ENCODE measurements at regions of chr22 and their contacts with region 1.

Region 1: GRCh38 chr22:49305214-49305909 is 522.3 kb downstream of the BRD1 start:
- DNase-seq: peak; percentile 90
- H3K4me3 ChIP-seq: no peak overlapping the region
- H3K27ac ChIP-seq: peak overlapping the region in 1 of 2 experiments; percentile 53; a peak in 1 of 4 replicates
- H3K4me1 ChIP-seq: peaks cover 0 to 18% of the 10 kb centered on the region in 2 experiments; a peak in 1 of 4 replicates
- H3K27me3 ChIP-seq: no peaks in the 10 kb centered on the region; the same call in 1 of the 2 replicates
- CTCF ChIP-seq: peak; percentile 59
- EP300 ChIP-seq: no peak
- RAD21 ChIP-seq: peak; percentile 85

Region 2: GRCh38 chr22:48943567-48944432 is 361.6 kb before region 1 on chr22:
- CTCF ChIA-PET with region 1: interaction called, 18 read pairs
- POLR2A ChIA-PET with region 1: no interaction called
- DNase-seq: peak; percentile 82
- H3K4me3 ChIP-seq: no peak overlapping the region
- H3K27ac ChIP-seq: no peak overlapping the region; a peak in 1 of 4 replicates
- H3K4me1 ChIP-seq: peaks cover 0 to 3% of the 10 kb centered on the region in 2 experiments; a peak in 1 of 4 replicates
- H3K27me3 ChIP-seq: no peaks in the 10 kb centered on the region; the same call in 1 of the 2 replicates
- CTCF ChIP-seq: peak; percentile 49
- EP300 ChIP-seq: no peak
- RAD21 ChIP-seq: peak; percentile 63

Region 3: GRCh38 chr22:49026494-49027380 is 278.6 kb before region 1 on chr22:
- CTCF ChIA-PET with region 1: interaction called, 15 read pairs
- POLR2A ChIA-PET with region 1: no interaction called
- DNase-seq: peak; percentile 62
- H3K4me3 ChIP-seq: no peak overlapping the region
- H3K27ac ChIP-seq: peak overlapping the region in 1 of 2 experiments; percentile 74; a peak in 2 of 4 replicates
- H3K4me1 ChIP-seq: peaks cover 0 to 47% of the 10 kb centered on the region in 2 experiments; a peak in 1 of 4 replicates
- H3K27me3 ChIP-seq: 0 out of 2 replicates have a peak, but pooled peaks cover 7% of the 10 kb centered on the region
- CTCF ChIP-seq: no peak
- EP300 ChIP-seq: no peak
- RAD21 ChIP-seq: peak; percentile 56

Region 4: GRCh38 chr22:49291169-49291568 is 14.2 kb before region 1 on chr22:
- CTCF ChIA-PET with region 1: interaction called, 25 read pairs
- POLR2A ChIA-PET with region 1: no interaction called
- DNase-seq: no peak
- H3K4me3 ChIP-seq: no peak overlapping the region
- H3K27ac ChIP-seq: no peak overlapping the region
- H3K4me1 ChIP-seq: no peaks in the 10 kb centered on the region; a peak in 1 of 4 replicates
- H3K27me3 ChIP-seq: peaks cover 17% of the 10 kb centered on the region
- CTCF ChIP-seq: no peak
- EP300 ChIP-seq: no peak
- RAD21 ChIP-seq: no peak

Measured in SK-N-SH (cell line).